Left ventricle myocardium inferior (tissue), 1 donor: ENCODE measurements at regions of chr7 and their contacts with region 1.

Region 1: DNA sequence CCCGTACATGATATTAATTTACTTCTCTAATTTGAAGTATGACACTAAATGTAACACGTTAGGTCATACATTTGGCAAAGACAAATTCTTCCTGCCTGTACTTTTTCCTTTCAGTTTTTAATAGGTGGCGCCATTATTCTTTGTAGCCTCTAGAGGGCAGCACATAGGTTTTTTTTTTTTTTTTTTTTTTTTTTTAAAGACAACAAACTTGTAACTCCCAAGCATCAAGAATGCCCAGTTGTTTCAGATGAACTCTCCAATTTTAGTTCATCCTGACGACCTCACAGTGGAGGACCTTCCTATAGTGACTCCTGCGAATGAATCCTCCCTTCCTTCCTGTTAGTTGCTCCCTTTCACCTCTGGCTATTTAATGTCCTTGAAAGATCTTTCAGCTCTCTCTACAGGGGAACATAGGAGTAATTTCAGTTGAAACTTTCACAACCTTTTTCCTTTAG is 139.3 kb upstream of the HDAC9 start:
- DNase-seq: no peak
- H3K4me3 ChIP-seq: peak overlapping the region; percentile 37
- H3K27ac ChIP-seq: peak overlapping the region; percentile 59
- H3K4me1 ChIP-seq: peaks cover 14% of the 10 kb centered on the region
- H3K27me3 ChIP-seq: no peaks in the 10 kb centered on the region
- CTCF ChIP-seq: peak; percentile 79

Region 2: DNA sequence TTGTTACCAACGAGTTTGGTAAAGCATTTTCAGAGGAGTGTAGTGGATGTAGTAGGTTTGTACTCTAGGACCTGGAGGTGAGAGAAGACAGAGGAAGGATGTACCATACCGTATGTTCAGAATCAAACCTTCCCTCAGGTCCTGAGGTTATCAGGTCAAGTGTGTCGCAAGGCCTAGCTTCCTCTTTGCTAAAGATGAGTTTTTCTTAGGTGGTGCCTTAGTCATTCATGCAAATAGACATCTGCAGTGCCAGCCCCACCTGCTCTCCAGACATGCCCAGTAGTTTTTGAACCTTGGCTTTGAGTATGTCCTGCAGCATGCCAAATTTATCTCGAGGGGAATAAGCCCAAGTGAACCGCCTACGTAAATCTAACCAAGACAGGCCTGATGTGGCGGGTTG is 210.6 kb after region 1 on chr7:
- intact Hi-C with region 1: loop called (anchors 2 kb)
- DNase-seq: no peak
- H3K4me3 ChIP-seq: no peak overlapping the region
- H3K27ac ChIP-seq: no peak overlapping the region
- H3K4me1 ChIP-seq: peaks cover 23% of the 10 kb centered on the region
- H3K27me3 ChIP-seq: no peaks in the 10 kb centered on the region
- CTCF ChIP-seq: no peak

Region 3: GRCh38 chr7:18666107-18666728 is 310.0 kb after region 1 on chr7:
- intact Hi-C with region 1: loop called (anchors 5 kb)
- DNase-seq: peak; percentile 71
- H3K4me3 ChIP-seq: no peak overlapping the region
- H3K27ac ChIP-seq: no peak overlapping the region
- H3K4me1 ChIP-seq: peaks cover 22% of the 10 kb centered on the region
- H3K27me3 ChIP-seq: no peaks in the 10 kb centered on the region
- CTCF ChIP-seq: peak; percentile 95